ENCODE measurements at regions of chrX and their contacts with region 1.

Region 1: DNA sequence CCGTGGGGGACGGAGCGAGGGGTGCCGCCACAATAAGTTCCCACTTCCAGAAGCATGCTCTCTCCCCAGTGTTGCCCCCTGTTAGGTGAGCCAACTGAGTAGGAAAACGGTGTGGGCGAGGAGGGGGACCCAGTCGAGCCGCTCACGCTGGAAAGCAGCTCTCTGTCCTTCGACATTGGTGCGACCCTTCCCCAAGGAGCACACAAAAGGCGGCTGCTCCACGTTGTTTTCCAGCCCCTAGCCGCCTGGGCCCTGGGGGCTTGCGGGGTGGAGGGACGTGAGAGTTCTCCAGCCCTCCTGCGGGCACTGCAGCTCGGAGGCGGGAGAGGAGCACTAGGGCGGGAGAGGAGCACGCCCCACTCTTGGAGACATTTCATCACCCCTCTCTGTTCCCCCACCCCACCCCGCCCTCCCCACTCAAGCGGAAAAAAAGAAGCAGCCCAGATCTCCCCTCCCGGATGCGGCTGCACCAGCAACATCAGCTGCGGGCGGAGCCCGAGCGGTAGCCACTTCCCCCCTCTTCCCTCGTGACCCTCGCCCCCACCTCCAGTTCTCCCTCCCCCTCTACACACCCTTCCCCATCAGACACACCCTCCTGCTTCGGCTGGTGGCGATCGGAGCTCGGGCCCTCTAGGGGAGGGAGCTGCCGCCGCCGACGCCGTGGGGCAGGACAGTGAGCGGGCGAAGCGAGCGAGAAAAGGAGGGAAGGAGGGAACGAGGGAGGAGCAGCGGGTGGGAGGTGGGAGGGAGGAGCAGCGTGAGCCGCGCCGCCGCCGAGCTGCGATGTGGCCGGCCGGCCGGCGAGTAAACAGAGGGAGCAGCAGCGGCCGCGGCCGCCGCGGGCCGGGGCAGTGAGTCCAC is at the start of gene DOCK11:
- DNase-seq: peak; percentile 76
- ATAC-seq: peak; percentile 94
- H3K4me3 ChIP-seq: peak within 1 kb of the TSS; percentile 78
- H3K27ac ChIP-seq: peak within 1 kb of the TSS; percentile 59
- H3K4me1 ChIP-seq: peaks cover 2% of the 10 kb centered on the region; the same call in 1 of the 2 replicates
- H3K27me3 ChIP-seq: no peaks in the 10 kb centered on the region
- CTCF ChIP-seq: no peak
- POLR2A ChIP-seq: no peak
- RAD21 ChIP-seq: no peak
- total RNA-seq, gene DOCK11: 13.1 and 14.7 TPM in 2 replicates

Region 2: GRCh38 chrX:118536687-118537461 is 41.6 kb after region 1 on chrX:
- CTCF ChIA-PET with region 1: no interaction called
- POLR2A ChIA-PET with region 1: no interaction called
- dilution Hi-C with region 1: no loop called
- in situ Hi-C with region 1: no loop called
- intact Hi-C with region 1: no loop called
- DNase-seq: peak; percentile 33
- ATAC-seq: peak; percentile 82
- H3K4me3 ChIP-seq: no peak overlapping the region; the same call in 1 of the 2 replicates
- H3K27ac ChIP-seq: peak overlapping the region; percentile 57; the same call in 1 of the 2 replicates
- H3K4me1 ChIP-seq: no peaks in the 10 kb centered on the region; the same call in 1 of the 2 replicates
- H3K27me3 ChIP-seq: no peaks in the 10 kb centered on the region
- CTCF ChIP-seq: peak; percentile 36
- POLR2A ChIP-seq: no peak
- RAD21 ChIP-seq: no peak

Region 3: DNA sequence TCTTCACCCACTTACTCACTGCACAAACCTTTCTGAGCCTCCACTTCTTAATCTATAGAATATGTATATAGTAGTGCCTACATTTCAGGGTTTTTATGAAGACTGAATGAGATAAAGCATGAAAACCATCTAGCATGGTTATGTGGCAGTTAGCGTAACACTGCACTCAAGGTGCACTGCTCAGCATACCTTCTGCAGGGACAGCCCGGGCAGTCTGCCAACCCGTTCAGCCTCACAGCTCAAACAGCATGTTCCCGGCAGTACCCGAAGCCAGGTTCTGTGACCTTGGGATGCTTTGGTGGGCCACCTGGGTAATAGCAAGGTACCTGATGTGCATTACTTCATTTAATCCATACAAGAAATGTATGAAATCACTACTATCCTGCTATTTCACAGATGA is 81.8 kb after region 1 on chrX:
- CTCF ChIA-PET with region 1: no interaction called
- POLR2A ChIA-PET with region 1: no interaction called
- dilution Hi-C with region 1: no loop called
- in situ Hi-C with region 1: no loop called
- intact Hi-C with region 1: loop called (anchors 5 kb)
- DNase-seq: no peak
- ATAC-seq: no peak
- H3K4me3 ChIP-seq: no peak overlapping the region
- H3K27ac ChIP-seq: no peak overlapping the region
- H3K4me1 ChIP-seq: no peaks in the 10 kb centered on the region
- H3K27me3 ChIP-seq: no peaks in the 10 kb centered on the region
- CTCF ChIP-seq: no peak
- POLR2A ChIP-seq: no peak
- RAD21 ChIP-seq: no peak